CD4-positive, alpha-beta T cell (primary cell): ENCODE measurements at regions of chr12 and their contacts with region 1.

Region 1: DNA sequence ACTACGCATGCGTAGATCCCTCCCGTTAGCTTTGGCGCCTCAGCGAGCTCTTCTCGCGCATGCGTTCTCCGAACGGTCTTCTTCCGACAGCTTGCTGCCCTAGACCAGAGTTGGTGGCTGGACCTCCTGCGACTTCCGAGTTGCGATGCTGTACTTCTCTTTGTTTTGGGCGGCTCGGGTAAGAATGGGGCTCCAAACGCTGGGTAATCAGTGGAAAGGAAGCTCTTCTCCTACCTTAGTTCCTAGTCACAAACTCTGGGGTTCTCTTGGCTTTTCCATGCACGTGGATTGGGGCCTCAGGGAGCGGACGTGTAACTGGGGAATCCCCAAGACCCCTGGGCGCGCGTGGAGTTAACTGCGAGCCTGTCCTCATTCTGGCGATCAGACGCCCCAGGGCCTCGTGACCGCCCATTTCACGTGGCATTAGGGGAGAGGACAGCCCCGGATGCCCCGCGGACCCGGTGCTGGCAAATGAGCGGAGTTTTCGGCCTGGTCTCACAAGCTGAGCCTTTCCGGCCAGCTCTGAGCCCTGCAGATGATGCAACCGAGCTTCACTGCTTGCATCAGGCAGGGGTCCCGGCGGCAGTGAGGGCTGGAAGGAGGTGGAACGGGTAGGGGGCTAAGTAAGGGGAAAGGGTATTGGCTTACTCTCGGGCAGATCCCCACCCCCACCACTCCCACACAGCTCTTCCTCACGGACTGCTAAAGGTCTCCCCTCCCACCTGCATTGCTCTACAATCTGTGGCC is at the start of gene SHMT2:
- DNase-seq: peak; percentile 81 to 97 (median 90)
- ATAC-seq: peak; percentile 55
- H3K4me3 ChIP-seq: peak within 1 kb of the TSS; percentile 98
- H3K4me3 Mint-ChIP-seq: peak within 1 kb of the TSS; percentile 93
- H3K27ac ChIP-seq: peak within 1 kb of the TSS; percentile 19 to 35
- H3K27ac Mint-ChIP-seq: peak within 1 kb of the TSS; percentile 76
- H3K4me1 ChIP-seq: peaks cover 65% of the 10 kb centered on the region
- H3K4me1 Mint-ChIP-seq: peaks cover 63% of the 10 kb centered on the region
- H3K27me3 ChIP-seq: peaks cover 16 to 23% of the 10 kb centered on the region in 2 experiments
- H3K27me3 Mint-ChIP-seq: peaks cover 29% of the 10 kb centered on the region
- CTCF ChIP-seq: no peak
- total RNA-seq, gene SHMT2: 21.3 to 22.2 TPM

Region 2: DNA sequence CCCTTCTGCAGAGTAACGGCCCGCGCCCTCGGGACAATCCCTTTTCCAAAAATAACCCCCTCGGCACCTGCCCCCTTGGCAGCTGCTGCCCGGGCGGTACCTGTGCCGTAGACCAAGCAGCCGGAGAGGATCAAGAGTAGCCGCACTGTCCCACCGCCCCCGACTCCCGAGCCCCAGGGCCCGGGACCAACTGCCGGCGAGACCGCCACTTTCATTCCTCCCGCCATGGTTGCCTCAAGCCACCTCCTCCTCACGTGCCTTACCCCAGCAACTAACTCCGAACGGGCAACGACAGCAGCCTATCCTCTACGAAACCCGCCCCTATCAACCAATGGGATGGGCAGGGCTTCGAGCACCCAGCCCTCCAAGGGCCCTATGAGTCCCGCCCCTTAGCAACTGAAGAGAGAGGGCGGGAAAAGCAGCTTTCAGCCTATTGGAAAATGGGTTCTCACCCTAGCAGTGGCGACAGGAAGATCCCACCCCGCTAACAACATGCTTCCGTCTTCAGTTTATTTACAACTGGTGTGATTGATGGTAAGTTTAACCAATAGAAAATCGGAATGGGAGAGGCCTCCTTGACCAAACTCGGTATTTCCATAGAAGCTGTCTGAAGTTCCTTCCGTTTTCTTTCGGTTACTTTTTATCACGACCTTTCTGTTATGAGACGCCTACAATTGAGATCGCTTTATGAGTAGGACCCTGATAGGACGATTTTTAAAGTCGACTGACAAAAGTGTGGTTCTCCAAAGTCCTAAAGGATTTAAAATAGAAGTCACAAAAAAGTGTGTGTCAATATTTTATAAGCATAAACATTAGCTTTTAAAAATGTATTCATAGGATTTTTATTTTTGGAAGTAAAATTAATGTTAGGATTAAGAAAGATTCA is 151.0 kb before region 1 on chr12 and contains the start of gene NEMP1:
- CTCF ChIA-PET with region 1: no interaction called
- POLR2A ChIA-PET with region 1: no interaction called
- intact Hi-C with region 1: loop called in 1 of 2 experiments (anchors 5 kb)
- DNase-seq: peak; percentile 85 to 100 (median 92)
- ATAC-seq: peak; percentile 94
- H3K4me3 ChIP-seq: peak within 1 kb of the TSS; percentile 85
- H3K4me3 Mint-ChIP-seq: peak within 1 kb of the TSS; percentile 95
- H3K27ac ChIP-seq: peak within 1 kb of the TSS; percentile 73 to 74
- H3K27ac Mint-ChIP-seq: peak within 1 kb of the TSS; percentile 88
- H3K4me1 ChIP-seq: peaks cover 28% of the 10 kb centered on the region
- H3K4me1 Mint-ChIP-seq: peaks cover 23% of the 10 kb centered on the region
- H3K27me3 ChIP-seq: no peaks in the 10 kb centered on the region
- H3K27me3 Mint-ChIP-seq: no peaks in the 10 kb centered on the region
- CTCF ChIP-seq: no peak
- total RNA-seq, gene NEMP1: 7.2 to 9.9 TPM

Region 3: GRCh38 chr12:57213058-57213715 is 16.6 kb before region 1 on chr12:
- CTCF ChIA-PET with region 1: interaction called, 24 read pairs
- POLR2A ChIA-PET with region 1: interaction called, 11 read pairs
- intact Hi-C with region 1: no loop called
- DNase-seq: peak; percentile 72 to 92 (median 81)
- ATAC-seq: peak; percentile 75
- H3K4me3 ChIP-seq: no peak overlapping the region
- H3K4me3 Mint-ChIP-seq: peak overlapping the region; percentile 72
- H3K27ac ChIP-seq: no peak overlapping the region
- H3K27ac Mint-ChIP-seq: no peak overlapping the region
- H3K4me1 ChIP-seq: peaks cover 51% of the 10 kb centered on the region
- H3K4me1 Mint-ChIP-seq: peaks cover 42% of the 10 kb centered on the region
- H3K27me3 ChIP-seq: peaks cover 39 to 44% of the 10 kb centered on the region in 2 experiments
- H3K27me3 Mint-ChIP-seq: peaks cover 43% of the 10 kb centered on the region
- CTCF ChIP-seq: peak; percentile 94